ENCODE measurements at regions of chr20 and their contacts with region 1.

Region 1: GRCh38 chr20:37202267-37202943 is 23.1 kb upstream of the MROH8 start:
- DNase-seq: peak in 1 of 2 donors; percentile 72
- H3K4me3 ChIP-seq: peak overlapping the region; percentile 22 to 29
- H3K27ac ChIP-seq: peak overlapping the region; percentile 41 to 68
- H3K4me1 ChIP-seq: no peaks in the 10 kb centered on the region
- H3K27me3 ChIP-seq: no peaks in the 10 kb centered on the region
- CTCF ChIP-seq: peak; percentile 49 to 85 (median 68)

Region 2: GRCh38 chr20:37228082-37228481 is 25.7 kb after region 1 on chr20:
- intact Hi-C with region 1: loop called (anchors 1 kb)
- DNase-seq: peak in 1 of 2 donors; percentile 76
- H3K4me3 ChIP-seq: no peak overlapping the region
- H3K27ac ChIP-seq: peak overlapping the region; percentile 55 to 62
- H3K4me1 ChIP-seq: peaks cover 7 to 29% of the 10 kb centered on the region in 2 donors
- H3K27me3 ChIP-seq: no peaks in the 10 kb centered on the region
- CTCF ChIP-seq: no peak

Region 3: GRCh38 chr20:37534401-37535157 is 332.2 kb after region 1 on chr20:
- intact Hi-C with region 1: loop called (anchors 5 kb)
- DNase-seq: peak in 1 of 2 donors; percentile 70
- H3K4me3 ChIP-seq: no peak overlapping the region
- H3K27ac ChIP-seq: no peak overlapping the region
- H3K4me1 ChIP-seq: no peaks in the 10 kb centered on the region
- H3K27me3 ChIP-seq: no peaks in the 10 kb centered on the region
- CTCF ChIP-seq: peak; percentile 80 to 86 (median 84)